Activated naive CD4-positive, alpha-beta T cell treated with anti-CD3 and anti-CD28 coated beads for 36 hours (primary cell): ENCODE measurements at regions of chr1 and their contacts with region 1.

Region 1: GRCh38 chr1:23743287-23744052 is at the start of gene ELOA:
- DNase-seq: peak; percentile 79
- H3K4me3 Mint-ChIP-seq: peak within 1 kb of the TSS; percentile 88
- H3K27ac Mint-ChIP-seq: peak within 1 kb of the TSS; percentile 85
- H3K4me1 Mint-ChIP-seq: peaks cover 42% of the 10 kb centered on the region
- H3K27me3 Mint-ChIP-seq: no peaks in the 10 kb centered on the region
- total RNA-seq, gene ELOA: 21.8 to 22.6 TPM

Region 2: DNA sequence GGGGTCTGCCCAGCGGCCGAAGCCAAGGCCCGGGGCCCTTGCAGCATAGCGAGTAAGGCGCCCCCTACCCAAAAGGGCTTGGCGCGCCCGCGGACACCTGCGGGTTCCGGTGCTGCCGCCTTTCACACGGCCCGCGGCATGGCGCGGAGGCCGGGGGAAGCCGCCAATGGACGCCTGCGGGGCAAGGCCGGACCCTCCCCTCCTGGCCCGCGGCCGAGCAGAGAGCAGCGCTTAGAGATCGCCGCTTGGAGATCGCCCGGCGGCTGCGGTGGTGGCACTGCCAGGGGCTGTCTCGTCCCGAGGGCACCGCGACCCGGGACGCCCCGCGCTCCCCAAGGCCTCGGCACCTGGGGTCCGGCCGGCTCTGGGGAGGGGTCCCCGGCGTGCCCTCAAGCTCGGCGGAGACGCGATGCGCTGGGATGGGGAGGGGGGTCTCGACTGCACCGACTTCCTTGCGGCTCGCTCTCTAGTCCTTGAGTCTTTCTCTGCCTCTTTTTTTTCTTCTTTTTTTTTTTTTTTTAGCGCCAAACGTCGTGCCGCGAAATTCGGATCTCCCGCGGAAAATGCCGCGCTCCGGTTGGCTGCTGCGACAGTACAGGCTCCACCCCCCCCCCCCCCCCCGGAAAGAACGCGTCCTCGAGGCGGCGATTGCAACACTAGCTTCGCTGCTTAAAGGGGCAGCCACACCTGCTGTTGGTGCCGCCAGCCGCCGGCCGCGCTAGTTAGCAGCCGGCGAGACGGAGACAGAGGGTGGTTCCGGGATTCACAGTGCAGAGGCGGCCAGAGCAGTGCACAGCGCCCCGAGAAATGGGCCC is 212.5 kb before region 1 on chr1 and contains the start of gene E2F2:
- CTCF ChIA-PET with region 1: no interaction called
- intact Hi-C with region 1: loop called (anchors 1 kb)
- DNase-seq: peak; percentile 87
- H3K4me3 Mint-ChIP-seq: peak within 1 kb of the TSS; percentile 91
- H3K27ac Mint-ChIP-seq: peak within 1 kb of the TSS; percentile 95
- H3K4me1 Mint-ChIP-seq: peaks cover 56% of the 10 kb centered on the region
- H3K27me3 Mint-ChIP-seq: peaks cover 2% of the 10 kb centered on the region
- total RNA-seq, gene E2F2: 31.3 to 33.8 TPM

Region 3: GRCh38 chr1:23691499-23692307 is 51.8 kb before region 1 on chr1 and contains the start of gene RPL11:
- CTCF ChIA-PET with region 1: interaction called, 15 read pairs
- intact Hi-C with region 1: loop called (anchors 1 kb)
- DNase-seq: peak; percentile 93
- H3K4me3 Mint-ChIP-seq: peak within 1 kb of the TSS; percentile 95
- H3K27ac Mint-ChIP-seq: peak within 1 kb of the TSS; percentile 97
- H3K4me1 Mint-ChIP-seq: peaks cover 43% of the 10 kb centered on the region
- H3K27me3 Mint-ChIP-seq: peaks cover under 1% of the 10 kb centered on the region
- total RNA-seq, gene RPL11: 1,701 to 1,742 TPM

Region 4: GRCh38 chr1:23720256-23720995 is 23.0 kb before region 1 on chr1:
- CTCF ChIA-PET with region 1: interaction called, 4 read pairs
- intact Hi-C with region 1: loop called (anchors 2 kb)
- DNase-seq: peak; percentile 57
- H3K4me3 Mint-ChIP-seq: no peak overlapping the region
- H3K27ac Mint-ChIP-seq: peak overlapping the region; percentile 67
- H3K4me1 Mint-ChIP-seq: peaks cover 28% of the 10 kb centered on the region
- H3K27me3 Mint-ChIP-seq: no peaks in the 10 kb centered on the region

Region 5: DNA sequence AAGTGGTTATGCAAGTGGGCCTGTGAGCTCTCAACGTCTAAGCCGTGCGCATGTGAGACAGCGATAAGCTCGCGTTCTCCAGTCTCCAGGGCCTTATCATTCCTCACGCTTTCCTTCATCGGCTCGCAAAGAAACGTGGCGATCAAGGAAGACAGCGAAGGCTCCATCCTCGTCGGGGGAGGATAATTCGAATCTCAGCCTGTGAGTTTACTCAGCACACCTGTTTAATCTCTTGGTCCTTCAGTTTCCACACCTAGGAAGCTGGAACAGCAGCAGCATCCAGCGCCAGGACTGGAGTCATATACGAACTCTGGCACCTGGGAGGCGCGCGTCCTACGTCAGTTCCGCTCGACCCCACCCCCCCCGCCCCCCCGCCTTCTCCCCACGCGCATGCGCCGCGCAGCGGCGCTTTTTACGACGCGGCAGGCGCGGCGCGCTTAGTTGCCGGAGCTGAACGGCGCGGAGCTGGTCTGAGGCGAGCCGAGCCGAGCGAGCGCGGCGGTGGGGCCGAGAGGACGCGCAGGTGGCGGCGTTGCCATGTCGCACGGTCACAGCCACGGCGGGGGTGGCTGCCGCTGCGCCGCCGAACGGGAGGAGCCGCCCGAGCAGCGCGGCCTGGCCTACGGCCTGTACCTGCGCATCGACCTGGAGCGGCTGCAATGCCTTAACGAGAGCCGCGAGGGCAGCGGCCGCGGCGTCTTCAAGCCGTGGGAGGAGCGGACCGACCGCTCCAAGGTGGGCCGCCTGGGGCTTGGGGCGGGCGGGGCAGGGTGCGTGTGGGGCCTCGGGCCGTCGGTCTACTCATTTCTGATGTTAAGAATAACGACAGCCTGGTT is 34.7 kb after region 1 on chr1 and contains the start of gene PITHD1:
- CTCF ChIA-PET with region 1: interaction called, 3 read pairs
- intact Hi-C with region 1: loop called (anchors 2 kb)
- DNase-seq: peak; percentile 81
- H3K4me3 Mint-ChIP-seq: peak within 1 kb of the TSS; percentile 86
- H3K27ac Mint-ChIP-seq: peak within 1 kb of the TSS; percentile 88
- H3K4me1 Mint-ChIP-seq: peaks cover 50% of the 10 kb centered on the region
- H3K27me3 Mint-ChIP-seq: no peaks in the 10 kb centered on the region
- total RNA-seq, gene PITHD1: 73.8 to 75.1 TPM

Region 6: GRCh38 chr1:24074817-24075725 is 331.6 kb after region 1 on chr1:
- CTCF ChIA-PET with region 1: no interaction called
- intact Hi-C with region 1: no loop called
- DNase-seq: no peak
- H3K4me3 Mint-ChIP-seq: no peak overlapping the region
- H3K27ac Mint-ChIP-seq: no peak overlapping the region
- H3K4me1 Mint-ChIP-seq: no peaks in the 10 kb centered on the region
- H3K27me3 Mint-ChIP-seq: no peaks in the 10 kb centered on the region